IMR-90 (cell line): ENCODE measurements at regions of chr12 and their contacts with region 1.

Region 1: GRCh38 chr12:575948-576612 is 87.2 kb downstream of the NINJ2 start:
- DNase-seq: peak; percentile 31
- ATAC-seq: peak; percentile 86
- H3K4me3 ChIP-seq: no peak overlapping the region; the same call in 1 of the 2 replicates
- H3K27ac ChIP-seq: no peak overlapping the region
- H3K4me1 ChIP-seq: peaks cover 12% of the 10 kb centered on the region
- H3K27me3 ChIP-seq: peaks cover 11% of the 10 kb centered on the region
- CTCF ChIP-seq: peak; percentile 92
- POLR2A ChIP-seq: no peak
- RAD21 ChIP-seq: peak; percentile 88

Region 2: DNA sequence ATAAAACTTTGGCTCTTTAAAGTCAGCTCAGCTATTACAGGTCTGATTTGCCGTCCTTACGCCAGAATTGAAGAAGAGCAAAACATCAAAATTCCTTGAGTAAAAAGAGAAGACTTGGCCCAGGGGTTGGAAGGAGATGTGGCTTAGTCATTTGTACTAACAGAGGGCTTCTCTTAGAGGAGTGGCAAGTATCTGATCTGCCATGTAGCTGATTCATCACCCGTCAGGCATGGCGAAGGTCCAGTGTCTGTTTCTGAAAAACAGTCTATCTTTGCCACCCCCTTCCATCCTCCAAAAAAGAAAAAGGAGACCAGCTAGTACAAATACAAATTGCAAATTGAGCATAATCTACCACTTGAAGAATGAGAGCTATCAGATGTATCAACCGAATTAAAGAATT is 281.5 kb after region 1 on chr12:
- CTCF ChIA-PET with region 1: interaction called, 4 read pairs
- POLR2A ChIA-PET with region 1: no interaction called
- dilution Hi-C with region 1: no loop called
- in situ Hi-C with region 1: no loop called
- intact Hi-C with region 1: loop called (anchors 10 kb)
- DNase-seq: peak; percentile 82
- ATAC-seq: peak; percentile 95
- H3K4me3 ChIP-seq: no peak overlapping the region
- H3K27ac ChIP-seq: peak overlapping the region; percentile 6; the same call in 1 of the 2 replicates
- H3K4me1 ChIP-seq: peaks cover 8% of the 10 kb centered on the region
- H3K27me3 ChIP-seq: no peaks in the 10 kb centered on the region
- CTCF ChIP-seq: no peak
- POLR2A ChIP-seq: no peak
- RAD21 ChIP-seq: no peak

Region 3: GRCh38 chr12:896031-896430 is 320.0 kb after region 1 on chr12:
- CTCF ChIA-PET with region 1: no interaction called
- POLR2A ChIA-PET with region 1: no interaction called
- dilution Hi-C with region 1: no loop called
- in situ Hi-C with region 1: no loop called
- intact Hi-C with region 1: loop called (anchors 10 kb)
- DNase-seq: no peak
- ATAC-seq: no peak
- H3K4me3 ChIP-seq: no peak overlapping the region
- H3K27ac ChIP-seq: no peak overlapping the region
- H3K4me1 ChIP-seq: peaks cover 3% of the 10 kb centered on the region; the same call in 1 of the 2 replicates
- H3K27me3 ChIP-seq: no peaks in the 10 kb centered on the region
- CTCF ChIP-seq: no peak
- POLR2A ChIP-seq: no peak
- RAD21 ChIP-seq: no peak